ENCODE measurements at regions of chr7 and their contacts with region 1.

Region 1: GRCh38 chr7:95608359-95609173 is 12.2 kb upstream of the PDK4 start:
- DNase-seq: peak; percentile 49
- ATAC-seq: peak; percentile 89
- H3K4me3 Mint-ChIP-seq: peak overlapping the region; percentile 81
- H3K27ac Mint-ChIP-seq: peak overlapping the region; percentile 91
- H3K4me1 Mint-ChIP-seq: peaks cover 67% of the 10 kb centered on the region
- H3K27me3 Mint-ChIP-seq: no peaks in the 10 kb centered on the region
- CTCF ChIP-seq: no peak

Region 2: DNA sequence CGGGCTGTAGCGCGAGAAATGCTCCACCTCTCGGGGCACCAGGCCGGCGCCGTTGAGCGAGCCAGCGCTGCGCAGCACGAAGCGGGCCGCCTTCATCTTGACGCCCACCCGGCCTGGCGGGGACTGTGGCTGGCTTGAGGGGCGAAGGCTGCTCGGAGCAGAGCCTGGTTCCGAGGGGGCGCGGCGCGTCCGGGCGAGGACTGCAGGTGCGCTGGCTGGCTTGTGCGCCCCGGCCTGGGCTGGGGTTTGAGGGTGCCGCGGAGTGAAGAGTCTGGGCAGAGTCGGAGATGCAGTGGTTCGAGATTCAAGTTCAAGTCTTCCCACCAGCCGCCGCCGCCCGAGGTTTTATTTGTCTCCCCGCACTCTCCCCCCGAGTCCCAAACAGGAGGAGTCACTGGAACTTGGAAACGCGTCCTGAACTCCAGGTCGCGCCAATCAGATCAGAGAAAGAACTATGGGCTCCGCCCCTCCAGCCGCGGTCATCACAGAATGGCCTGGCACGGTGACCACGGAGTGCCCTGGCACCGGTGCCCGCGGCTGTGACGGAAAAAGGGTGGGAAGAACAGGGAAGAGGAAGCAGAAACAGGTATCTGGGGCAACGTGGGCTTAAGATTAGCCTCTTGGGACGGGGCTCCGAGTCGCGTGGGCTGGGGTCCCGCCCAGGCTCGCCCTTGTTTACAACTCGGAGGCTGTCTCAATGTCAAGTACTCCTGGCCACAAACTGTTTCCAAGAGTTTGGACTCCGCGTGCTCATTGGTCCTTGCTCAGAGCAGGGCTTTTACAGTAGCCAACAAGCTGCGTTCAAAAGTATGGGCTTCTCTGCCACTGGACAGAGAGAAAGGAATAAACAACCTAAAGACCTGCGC is 12.1 kb before region 1 on chr7 and contains the start of gene PDK4:
- CTCF ChIA-PET with region 1: no interaction called
- POLR2A ChIA-PET with region 1: no interaction called
- intact Hi-C with region 1: loop called (anchors 1 kb)
- DNase-seq: peak; percentile 32
- ATAC-seq: peak; percentile 72
- H3K4me3 Mint-ChIP-seq: peak within 1 kb of the TSS; percentile 92
- H3K27ac Mint-ChIP-seq: peak within 1 kb of the TSS; percentile 65
- H3K4me1 Mint-ChIP-seq: peaks cover 27% of the 10 kb centered on the region
- H3K27me3 Mint-ChIP-seq: no peaks in the 10 kb centered on the region
- CTCF ChIP-seq: no peak
- total RNA-seq, gene PDK4: 0.44 and 0.53 TPM in 2 replicates

Region 3: DNA sequence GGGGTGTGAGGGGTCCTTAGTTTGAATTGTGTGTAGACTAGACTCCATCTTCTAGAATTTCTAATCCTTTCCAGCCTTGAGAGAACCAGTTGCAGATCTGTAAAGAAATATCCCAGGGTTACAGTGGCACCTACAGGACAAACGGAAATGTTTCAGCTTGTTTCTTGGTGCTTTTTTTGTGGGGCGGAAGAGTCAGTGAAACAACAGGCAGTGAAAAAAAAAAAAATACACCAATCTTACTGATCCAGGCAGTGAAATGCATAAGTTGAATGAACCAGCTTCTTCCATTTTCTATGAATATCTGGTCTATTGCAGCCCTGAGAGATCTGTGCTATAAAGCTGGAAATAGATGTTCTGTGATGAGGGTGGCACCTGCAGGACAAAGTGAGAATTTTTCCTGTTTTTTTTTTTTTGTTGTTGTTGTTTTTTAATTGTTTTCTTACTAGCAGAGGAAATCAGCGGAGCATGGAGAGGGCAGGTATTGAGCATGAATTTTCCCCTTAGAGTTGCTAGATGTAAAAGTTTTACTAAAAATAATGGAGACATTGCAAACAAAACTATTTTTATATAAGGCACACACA is 81.9 kb after region 1 on chr7:
- CTCF ChIA-PET with region 1: interaction called, 8 read pairs
- POLR2A ChIA-PET with region 1: interaction called, 3 read pairs
- intact Hi-C with region 1: loop called (anchors 5 kb)
- DNase-seq: no peak
- ATAC-seq: peak; percentile 72
- H3K4me3 Mint-ChIP-seq: peak overlapping the region; percentile 2
- H3K27ac Mint-ChIP-seq: no peak overlapping the region
- H3K4me1 Mint-ChIP-seq: peaks cover 4% of the 10 kb centered on the region
- H3K27me3 Mint-ChIP-seq: peaks cover 3% of the 10 kb centered on the region
- CTCF ChIP-seq: peak; percentile 87

Region 4: GRCh38 chr7:95715274-95715673 is 106.7 kb after region 1 on chr7:
- CTCF ChIA-PET with region 1: no interaction called
- POLR2A ChIA-PET with region 1: no interaction called
- intact Hi-C with region 1: loop called (anchors 1 kb)
- DNase-seq: no peak
- ATAC-seq: peak; percentile 95
- H3K4me3 Mint-ChIP-seq: no peak overlapping the region
- H3K27ac Mint-ChIP-seq: peak overlapping the region; percentile 12
- H3K4me1 Mint-ChIP-seq: peaks cover 17% of the 10 kb centered on the region
- H3K27me3 Mint-ChIP-seq: peaks cover 7% of the 10 kb centered on the region
- CTCF ChIP-seq: no peak

Region 5: DNA sequence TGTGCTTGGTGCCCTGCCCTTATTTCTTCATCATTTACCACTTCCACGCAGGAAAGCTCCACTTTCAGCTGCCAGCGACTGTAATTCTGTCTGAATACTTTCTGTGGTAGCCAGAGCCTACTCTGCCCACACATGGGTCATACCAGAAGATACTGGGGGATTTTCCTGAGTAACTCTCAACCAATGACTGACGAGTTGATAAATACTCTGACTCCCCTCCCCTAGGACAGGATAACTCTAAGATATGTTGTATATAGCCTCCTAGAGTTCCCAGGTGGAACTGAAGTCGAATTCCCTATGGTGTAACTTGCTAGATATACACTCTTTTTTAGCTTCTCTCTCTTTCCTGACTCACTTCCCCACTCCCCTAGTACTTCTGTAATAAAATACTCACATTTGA is 1071.3 kb after region 1 on chr7:
- CTCF ChIA-PET with region 1: no interaction called
- POLR2A ChIA-PET with region 1: no interaction called
- intact Hi-C with region 1: no loop called
- DNase-seq: no peak
- ATAC-seq: no peak
- H3K4me3 Mint-ChIP-seq: no peak overlapping the region
- H3K27ac Mint-ChIP-seq: no peak overlapping the region
- H3K4me1 Mint-ChIP-seq: peaks cover 5% of the 10 kb centered on the region
- H3K27me3 Mint-ChIP-seq: no peaks in the 10 kb centered on the region
- CTCF ChIP-seq: no peak

Measured in activated B cell treated with CpG ODN at 0.5 μM for 24 hours (primary cell).